A673 (cell line): ENCODE measurements at regions of chr15 and their contacts with region 1.

Region 1: DNA sequence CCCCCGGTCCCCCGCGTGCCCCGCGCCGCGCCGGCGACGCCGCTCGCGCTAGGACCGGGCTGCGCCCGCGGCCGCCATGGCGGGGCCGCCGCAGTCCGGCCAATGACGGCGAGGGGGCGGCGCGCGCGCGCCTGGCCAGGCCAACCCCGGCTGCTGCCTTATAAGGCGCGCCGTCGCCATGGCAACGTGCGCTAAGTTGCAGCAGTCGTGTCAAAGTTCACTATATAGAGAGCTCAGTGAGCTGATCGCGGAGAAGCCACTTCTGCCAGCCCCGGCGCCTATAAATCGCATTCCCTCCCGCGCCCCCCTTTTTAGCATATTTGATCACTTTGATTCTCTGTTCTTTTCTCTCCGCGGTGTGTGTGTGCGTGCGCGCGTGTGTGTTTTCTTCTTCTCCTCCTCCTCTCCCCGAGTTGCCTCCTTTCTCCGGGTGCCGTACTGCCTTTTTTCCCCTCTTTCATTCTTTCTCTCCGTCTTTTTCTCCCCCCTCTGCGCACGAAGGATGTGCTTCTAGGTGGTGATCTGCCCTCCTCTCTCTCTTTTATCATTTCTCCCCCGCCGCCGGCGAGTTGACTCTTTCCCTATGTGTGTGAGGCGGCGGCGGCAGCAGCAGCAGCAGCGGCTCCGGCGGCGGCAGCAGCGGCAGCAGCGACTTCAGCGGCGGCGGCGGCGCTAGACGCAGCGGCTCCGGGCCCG is at the start of gene NR2F2:
- DNase-seq: peak; percentile 99
- H3K4me3 ChIP-seq: peak within 1 kb of the TSS; percentile 77
- H3K27ac ChIP-seq: peak within 1 kb of the TSS; percentile 97
- H3K4me1 ChIP-seq: peaks cover 23% of the 10 kb centered on the region
- H3K27me3 ChIP-seq: no peaks in the 10 kb centered on the region
- CTCF ChIP-seq: no peak
- total RNA-seq, gene NR2F2: 106 and 138 TPM in 2 replicates

Region 2: DNA sequence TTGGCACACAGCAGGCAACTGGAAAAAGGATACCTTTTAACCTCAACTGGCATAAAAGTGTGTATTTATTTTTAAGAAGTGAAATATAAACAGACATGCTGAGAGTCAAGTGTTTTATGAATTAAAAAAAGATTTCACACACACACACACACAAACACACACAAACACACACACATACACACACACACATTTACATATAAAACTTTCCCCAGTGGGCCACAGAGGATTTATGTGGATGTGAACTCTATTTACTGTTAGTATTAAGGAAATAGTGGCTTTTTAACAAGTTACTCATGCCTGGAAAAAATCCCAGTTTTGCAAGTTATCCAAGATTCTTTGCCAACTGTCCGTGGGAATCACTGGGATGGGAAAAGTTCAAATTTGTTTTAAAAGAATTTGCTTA is 726.0 kb before region 1 on chr15:
- CTCF ChIA-PET with region 1: no interaction called
- POLR2A ChIA-PET with region 1: no interaction called
- intact Hi-C with region 1: loop called (anchors 10 kb)
- DNase-seq: peak; percentile 45
- H3K4me3 ChIP-seq: no peak overlapping the region
- H3K27ac ChIP-seq: peak overlapping the region; percentile 78
- H3K4me1 ChIP-seq: peaks cover 50% of the 10 kb centered on the region
- H3K27me3 ChIP-seq: no peaks in the 10 kb centered on the region
- CTCF ChIP-seq: no peak

Region 3: GRCh38 chr15:96053031-96053780 is 277.4 kb before region 1 on chr15:
- CTCF ChIA-PET with region 1: no interaction called
- POLR2A ChIA-PET with region 1: no interaction called
- intact Hi-C with region 1: loop called (anchors 10 kb)
- DNase-seq: peak; percentile 53
- H3K4me3 ChIP-seq: peak overlapping the region; percentile 41
- H3K27ac ChIP-seq: no peak overlapping the region
- H3K4me1 ChIP-seq: peaks cover 20% of the 10 kb centered on the region
- H3K27me3 ChIP-seq: no peaks in the 10 kb centered on the region
- CTCF ChIP-seq: no peak

Region 4: GRCh38 chr15:96130734-96131133 is 199.9 kb before region 1 on chr15:
- CTCF ChIA-PET with region 1: no interaction called
- POLR2A ChIA-PET with region 1: no interaction called
- intact Hi-C with region 1: no loop called
- DNase-seq: no peak
- H3K4me3 ChIP-seq: no peak overlapping the region
- H3K27ac ChIP-seq: no peak overlapping the region
- H3K4me1 ChIP-seq: no peaks in the 10 kb centered on the region
- H3K27me3 ChIP-seq: no peaks in the 10 kb centered on the region
- CTCF ChIP-seq: no peak

Region 5: GRCh38 chr15:96893159-96893906 is 562.7 kb after region 1 on chr15:
- CTCF ChIA-PET with region 1: no interaction called
- POLR2A ChIA-PET with region 1: no interaction called
- intact Hi-C with region 1: loop called (anchors 2 kb)
- DNase-seq: peak; percentile 90
- H3K4me3 ChIP-seq: no peak overlapping the region
- H3K27ac ChIP-seq: peak overlapping the region; percentile 89
- H3K4me1 ChIP-seq: peaks cover 77% of the 10 kb centered on the region
- H3K27me3 ChIP-seq: no peaks in the 10 kb centered on the region
- CTCF ChIP-seq: peak; percentile 91

Region 6: GRCh38 chr15:97248376-97248775 is 917.8 kb after region 1 on chr15:
- CTCF ChIA-PET with region 1: interaction called, 11 read pairs
- POLR2A ChIA-PET with region 1: no interaction called
- intact Hi-C with region 1: loop called (anchors 1 kb)
- DNase-seq: no peak
- H3K4me3 ChIP-seq: no peak overlapping the region
- H3K27ac ChIP-seq: no peak overlapping the region
- H3K4me1 ChIP-seq: peaks cover 5% of the 10 kb centered on the region
- H3K27me3 ChIP-seq: no peaks in the 10 kb centered on the region
- CTCF ChIP-seq: no peak